Activated CD8-positive, alpha-beta T cell treated with anti-CD3 and anti-CD28 coated beads for 36 hours (primary cell): ENCODE measurements at regions of chr1 and their contacts with region 1.

Region 1: GRCh38 chr1:151340870-151341754 is 5.9 kb downstream of the RFX5 start:
- DNase-seq: peak; percentile 67
- ATAC-seq: peak; percentile 82
- H3K4me3 Mint-ChIP-seq: no peak overlapping the region
- H3K27ac Mint-ChIP-seq: peak overlapping the region; percentile 46
- H3K4me1 Mint-ChIP-seq: peaks cover 26% of the 10 kb centered on the region
- H3K27me3 Mint-ChIP-seq: no peaks in the 10 kb centered on the region
- CTCF ChIP-seq: peak; percentile 86

Region 2: DNA sequence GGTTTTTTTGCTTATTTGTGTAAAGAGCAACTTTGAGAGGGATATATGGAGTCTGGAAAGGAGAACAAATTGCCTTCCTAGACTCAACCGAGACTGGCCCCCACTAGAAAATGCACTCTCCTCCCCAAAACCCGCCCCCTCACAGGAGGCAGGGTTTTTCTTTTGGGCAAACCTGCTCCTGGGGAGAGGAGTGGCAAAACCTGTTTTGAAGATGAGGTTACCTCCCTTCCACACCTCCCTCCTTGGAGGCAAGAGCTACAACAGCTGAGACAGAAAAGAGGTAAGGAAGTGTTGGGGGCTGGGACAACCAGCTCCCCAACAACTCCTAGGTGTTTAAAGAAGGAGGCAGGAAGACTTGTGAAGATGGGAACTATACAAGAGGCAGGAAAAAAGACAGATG is 304.7 kb before region 1 on chr1 and contains the start of gene BNIPL:
- CTCF ChIA-PET with region 1: no interaction called
- POLR2A ChIA-PET with region 1: no interaction called
- intact Hi-C with region 1: no loop called
- DNase-seq: no peak
- ATAC-seq: no peak
- H3K4me3 Mint-ChIP-seq: no peak within 1 kb of the TSS
- H3K27ac Mint-ChIP-seq: no peak within 1 kb of the TSS
- H3K4me1 Mint-ChIP-seq: no peaks in the 10 kb centered on the region
- H3K27me3 Mint-ChIP-seq: no peaks in the 10 kb centered on the region
- CTCF ChIP-seq: no peak
- total RNA-seq, gene BNIPL: 0.54 to 1.4 TPM

Region 3: DNA sequence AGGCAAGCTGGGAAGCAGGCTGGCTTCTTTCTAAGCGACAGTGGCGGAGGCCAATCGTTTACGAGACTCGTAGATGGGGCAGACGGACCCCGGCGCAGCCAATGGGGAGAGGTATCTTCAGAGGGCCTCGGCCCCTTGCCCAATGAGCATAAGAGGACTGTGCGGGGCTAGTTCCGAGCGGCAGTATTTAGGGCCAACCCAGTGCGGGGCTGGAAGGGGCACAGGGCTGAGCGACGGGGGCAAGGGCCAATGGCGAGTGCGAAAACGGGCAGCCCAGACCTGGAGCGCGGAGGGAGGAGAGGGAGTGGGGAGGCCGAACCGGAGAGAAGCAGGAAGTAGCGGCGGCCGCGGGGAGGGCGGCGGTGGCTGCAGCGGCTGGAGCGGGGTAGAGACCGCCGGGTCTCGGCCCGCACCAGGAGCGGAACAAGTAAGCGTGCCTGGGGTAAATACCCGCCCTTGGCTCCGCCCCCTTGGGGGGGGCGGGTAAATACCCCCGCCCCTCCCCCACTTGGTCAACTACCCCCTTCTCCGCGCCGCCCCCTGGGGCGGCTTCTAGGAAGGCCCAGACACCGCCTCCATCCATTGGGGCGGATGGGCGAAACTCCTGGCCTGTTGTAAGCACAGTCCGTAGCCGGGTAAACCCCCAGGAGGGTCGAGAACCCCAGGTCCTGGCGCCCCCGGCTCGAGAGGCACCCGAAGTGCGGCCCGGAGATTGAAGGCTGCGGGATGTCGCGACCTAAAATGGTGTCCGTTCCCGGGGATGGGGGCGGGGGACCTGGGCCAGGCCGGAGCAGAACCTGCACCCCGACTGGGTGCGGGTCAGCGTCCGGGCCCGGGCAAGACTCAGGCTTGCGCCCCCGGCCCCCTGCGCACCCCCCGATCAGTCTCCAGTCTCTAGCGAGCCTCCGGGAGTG is 58.9 kb before region 1 on chr1 and contains the start of gene ZNF687:
- CTCF ChIA-PET with region 1: interaction called, 22 read pairs
- POLR2A ChIA-PET with region 1: interaction called, 5 read pairs
- intact Hi-C with region 1: loop called (anchors 5 kb)
- DNase-seq: peak; percentile 100
- ATAC-seq: peak; percentile 90
- H3K4me3 Mint-ChIP-seq: peak within 1 kb of the TSS; percentile 96
- H3K27ac Mint-ChIP-seq: peak within 1 kb of the TSS; percentile 100
- H3K4me1 Mint-ChIP-seq: peaks cover 26% of the 10 kb centered on the region
- H3K27me3 Mint-ChIP-seq: no peaks in the 10 kb centered on the region
- CTCF ChIP-seq: no peak
- total RNA-seq, gene ZNF687: 27.3 to 29.5 TPM

Region 4: DNA sequence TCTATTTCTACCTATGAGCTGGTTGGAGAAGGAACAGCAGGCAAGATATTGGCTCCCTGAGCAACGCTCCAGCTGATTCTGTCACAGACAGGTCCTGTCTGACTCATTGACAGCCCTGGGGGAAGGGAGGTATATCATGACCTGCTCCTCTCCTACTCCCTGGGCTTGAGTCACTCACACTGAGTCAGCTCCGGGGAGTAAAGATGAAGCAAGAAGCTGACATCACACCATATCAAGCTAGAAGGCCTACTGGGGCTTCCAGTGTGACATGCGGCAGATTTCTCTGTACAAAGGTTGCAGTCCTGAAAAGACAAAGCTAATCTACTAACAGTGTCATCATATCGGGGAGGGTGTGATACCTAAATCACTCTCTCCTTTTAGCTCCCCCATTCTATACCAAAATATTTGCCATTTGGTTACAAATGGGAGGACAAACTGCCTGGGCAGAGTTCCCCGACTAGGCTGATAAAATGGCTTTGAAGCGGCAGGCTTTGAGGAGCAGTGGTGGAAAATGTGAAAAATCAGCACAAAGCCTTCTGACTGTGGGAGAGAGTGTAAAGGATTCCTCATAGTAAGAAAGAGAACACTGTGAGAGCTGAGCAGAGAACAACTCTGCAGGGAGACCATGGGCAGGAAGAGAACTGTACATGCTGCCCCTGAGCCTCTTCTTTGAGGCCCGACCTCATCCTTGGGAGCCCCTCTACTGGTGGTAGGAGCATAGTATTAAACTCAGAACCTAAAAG is 29.4 kb before region 1 on chr1:
- CTCF ChIA-PET with region 1: interaction called, 179 read pairs
- POLR2A ChIA-PET with region 1: interaction called, 13 read pairs
- intact Hi-C with region 1: no loop called
- DNase-seq: peak; percentile 93
- ATAC-seq: peak; percentile 100
- H3K4me3 Mint-ChIP-seq: peak overlapping the region; percentile 0
- H3K27ac Mint-ChIP-seq: peak overlapping the region; percentile 97
- H3K4me1 Mint-ChIP-seq: peaks cover 27% of the 10 kb centered on the region
- H3K27me3 Mint-ChIP-seq: no peaks in the 10 kb centered on the region
- CTCF ChIP-seq: no peak

Region 5: GRCh38 chr1:151327223-151327902 is 13.7 kb before region 1 on chr1 and contains the start of gene PI4KB:
- CTCF ChIA-PET with region 1: interaction called, 115 read pairs
- POLR2A ChIA-PET with region 1: interaction called, 10 read pairs
- intact Hi-C with region 1: no loop called
- DNase-seq: peak; percentile 97
- ATAC-seq: peak; percentile 94
- H3K4me3 Mint-ChIP-seq: peak within 1 kb of the TSS; percentile 84
- H3K27ac Mint-ChIP-seq: peak within 1 kb of the TSS; percentile 96
- H3K4me1 Mint-ChIP-seq: peaks cover 29% of the 10 kb centered on the region
- H3K27me3 Mint-ChIP-seq: no peaks in the 10 kb centered on the region
- CTCF ChIP-seq: no peak
- total RNA-seq, gene PI4KB: 46.6 to 47.3 TPM